Vagina (tissue), 2 donors: ENCODE measurements at regions of chr18 and their contacts with region 1.

Region 1: GRCh38 chr18:34583895-34584294 is 126.2 kb upstream of the DTNA start:
- DNase-seq: no peak
- H3K4me3 ChIP-seq: no peak overlapping the region
- H3K27ac ChIP-seq: no peak overlapping the region
- H3K4me1 ChIP-seq: no peaks in the 10 kb centered on the region
- H3K27me3 ChIP-seq: no peaks in the 10 kb centered on the region
- CTCF ChIP-seq: no peak
- POLR2A ChIP-seq: no peak

Region 2: GRCh38 chr18:34828104-34828503 is 244.2 kb after region 1 on chr18:
- intact Hi-C with region 1: no loop called
- DNase-seq: no peak
- H3K4me3 ChIP-seq: no peak overlapping the region
- H3K27ac ChIP-seq: no peak overlapping the region
- H3K4me1 ChIP-seq: no peaks in the 10 kb centered on the region
- H3K27me3 ChIP-seq: no peaks in the 10 kb centered on the region
- CTCF ChIP-seq: no peak
- POLR2A ChIP-seq: no peak

Region 3: GRCh38 chr18:35934002-35934401 is 1350.1 kb after region 1 on chr18:
- intact Hi-C with region 1: loop called (anchors 5 kb)
- DNase-seq: no peak
- H3K4me3 ChIP-seq: no peak overlapping the region
- H3K27ac ChIP-seq: no peak overlapping the region
- H3K4me1 ChIP-seq: no peaks in the 10 kb centered on the region
- H3K27me3 ChIP-seq: no peaks in the 10 kb centered on the region
- CTCF ChIP-seq: no peak
- POLR2A ChIP-seq: no peak